ENCODE measurements at regions of chr3 and their contacts with region 1.

Region 1: DNA sequence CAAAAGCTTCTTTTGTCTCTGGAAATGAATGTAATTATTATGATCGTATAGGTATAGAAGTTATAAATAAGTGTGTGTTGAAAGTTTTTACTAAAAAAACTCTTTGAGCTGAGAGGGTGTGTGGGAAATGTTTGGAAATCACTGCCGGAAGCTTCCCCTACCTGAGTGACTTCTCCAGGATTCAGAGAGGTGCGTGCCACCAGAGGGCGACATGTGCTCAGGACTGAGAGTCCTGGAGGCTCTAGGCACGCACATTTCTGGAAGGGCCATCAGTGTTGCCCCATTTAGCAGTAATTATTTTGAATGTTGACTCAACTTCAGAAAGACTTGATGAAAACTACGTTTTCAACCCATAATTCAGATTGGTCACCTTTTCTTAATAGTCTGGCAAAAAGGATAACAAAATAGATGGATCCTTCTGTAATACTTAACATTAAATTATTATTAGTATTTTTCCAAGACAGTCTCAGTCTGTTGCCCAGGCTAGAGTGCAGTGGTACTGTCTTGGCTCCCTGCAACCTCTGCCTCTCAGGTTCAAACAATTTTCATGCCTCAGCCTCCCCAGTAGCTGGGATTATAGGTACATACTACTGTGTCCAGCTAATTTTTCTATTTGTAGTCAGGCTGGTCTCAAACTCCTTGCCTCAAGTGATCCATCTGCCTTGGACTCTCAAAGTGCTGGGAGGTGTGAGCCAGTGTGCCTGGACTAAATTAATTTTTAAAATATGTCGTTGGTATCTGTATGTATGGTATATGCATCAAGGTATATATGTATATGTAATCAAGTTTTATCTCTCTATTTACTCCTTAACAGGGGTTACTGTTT is 34.5 kb downstream of the GPR171 start:
- DNase-seq: peak; percentile 66
- H3K4me3 Mint-ChIP-seq: no peak overlapping the region
- H3K27ac Mint-ChIP-seq: no peak overlapping the region
- H3K4me1 Mint-ChIP-seq: peaks cover 46% of the 10 kb centered on the region
- H3K27me3 Mint-ChIP-seq: peaks cover 3% of the 10 kb centered on the region

Region 2: GRCh38 chr3:151183265-151183671 is 14.8 kb after region 1 on chr3:
- intact Hi-C with region 1: loop called (anchors 1 kb)
- DNase-seq: peak; percentile 33
- H3K4me3 Mint-ChIP-seq: peak overlapping the region; percentile 69
- H3K27ac Mint-ChIP-seq: peak overlapping the region; percentile 77
- H3K4me1 Mint-ChIP-seq: peaks cover 58% of the 10 kb centered on the region
- H3K27me3 Mint-ChIP-seq: peaks cover 1% of the 10 kb centered on the region

Region 3: DNA sequence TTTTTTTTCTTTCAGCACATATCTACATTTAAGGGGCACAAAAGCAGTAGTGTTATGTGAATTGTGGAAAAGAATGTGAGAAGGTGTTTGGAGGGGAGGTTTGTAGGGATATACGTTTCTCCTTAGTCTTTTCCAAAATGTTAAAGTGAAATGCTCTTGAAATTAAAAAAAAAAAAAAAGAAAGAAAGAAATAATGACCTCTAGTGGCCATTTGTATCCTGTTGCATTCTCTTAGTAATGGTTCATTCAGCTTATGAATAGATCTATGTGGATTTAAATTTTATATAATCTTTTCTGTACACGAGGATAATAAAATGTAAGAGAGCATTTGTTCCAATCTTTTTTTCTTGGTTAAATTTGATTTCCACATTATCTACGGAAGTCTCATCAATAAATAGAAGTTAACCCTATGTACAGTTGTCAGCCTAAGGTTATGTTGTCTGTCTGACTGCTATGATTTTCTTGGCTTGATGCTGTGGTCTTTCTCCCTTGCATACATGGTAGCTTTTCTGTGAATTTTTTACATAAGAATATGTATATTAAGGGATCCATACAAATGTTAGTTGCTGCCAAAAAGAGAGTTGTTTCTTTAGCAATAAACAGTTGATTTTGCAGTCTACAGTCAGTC is 159.2 kb after region 1 on chr3:
- intact Hi-C with region 1: loop called (anchors 1 kb)
- DNase-seq: no peak
- H3K4me3 Mint-ChIP-seq: no peak overlapping the region
- H3K27ac Mint-ChIP-seq: no peak overlapping the region
- H3K4me1 Mint-ChIP-seq: peaks cover 8% of the 10 kb centered on the region
- H3K27me3 Mint-ChIP-seq: peaks cover 12% of the 10 kb centered on the region